Motor neuron (in vitro differentiated cells): ENCODE measurements at regions of chr14 and their contacts with region 1.

Region 1: GRCh38 chr14:23984891-23985602 is 3.7 kb upstream of the DHRS4L2 start:
- ATAC-seq: peak in 2 of 8 experiments; percentile 44 to 61
- H3K4me3 ChIP-seq: no peak overlapping the region
- H3K27ac ChIP-seq: no peak overlapping the region
- H3K4me1 ChIP-seq: peaks cover 0 to 19% of the 10 kb centered on the region in 2 donors

Region 2: DNA sequence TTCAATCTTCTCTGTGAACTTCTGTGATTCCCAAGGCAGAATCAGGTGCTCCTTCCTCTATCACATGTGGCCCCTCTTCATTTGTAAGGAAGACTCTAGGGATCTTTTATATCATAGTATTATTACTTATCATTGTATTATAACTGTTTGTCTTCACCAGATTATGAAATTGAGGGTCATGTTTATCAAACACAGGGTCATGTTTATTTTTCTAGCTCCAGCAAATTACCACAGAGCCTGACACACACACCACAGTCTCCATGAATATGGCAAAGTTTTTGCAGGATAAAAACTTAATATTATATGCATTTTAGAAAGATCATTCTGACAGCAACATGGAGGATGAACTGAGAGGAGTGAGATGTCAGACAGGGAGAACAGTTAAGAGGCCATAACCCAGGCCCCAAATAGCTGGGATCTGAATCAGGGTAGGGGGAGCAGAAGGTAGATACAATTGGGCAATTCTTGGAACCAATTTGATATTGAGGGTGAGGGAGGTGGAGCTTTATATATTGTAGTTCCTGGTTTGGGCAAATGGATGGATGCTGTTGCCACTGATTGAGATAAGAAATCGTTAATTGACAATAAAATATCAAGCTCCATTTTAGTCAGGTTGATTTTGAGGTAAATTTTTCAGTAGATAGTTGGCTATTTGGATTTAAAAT is 218.2 kb before region 1 on chr14:
- in situ Hi-C with region 1: no loop called
- ATAC-seq: no peak
- H3K4me3 ChIP-seq: no peak overlapping the region
- H3K27ac ChIP-seq: no peak overlapping the region
- H3K4me1 ChIP-seq: no peaks in the 10 kb centered on the region

Region 3: DNA sequence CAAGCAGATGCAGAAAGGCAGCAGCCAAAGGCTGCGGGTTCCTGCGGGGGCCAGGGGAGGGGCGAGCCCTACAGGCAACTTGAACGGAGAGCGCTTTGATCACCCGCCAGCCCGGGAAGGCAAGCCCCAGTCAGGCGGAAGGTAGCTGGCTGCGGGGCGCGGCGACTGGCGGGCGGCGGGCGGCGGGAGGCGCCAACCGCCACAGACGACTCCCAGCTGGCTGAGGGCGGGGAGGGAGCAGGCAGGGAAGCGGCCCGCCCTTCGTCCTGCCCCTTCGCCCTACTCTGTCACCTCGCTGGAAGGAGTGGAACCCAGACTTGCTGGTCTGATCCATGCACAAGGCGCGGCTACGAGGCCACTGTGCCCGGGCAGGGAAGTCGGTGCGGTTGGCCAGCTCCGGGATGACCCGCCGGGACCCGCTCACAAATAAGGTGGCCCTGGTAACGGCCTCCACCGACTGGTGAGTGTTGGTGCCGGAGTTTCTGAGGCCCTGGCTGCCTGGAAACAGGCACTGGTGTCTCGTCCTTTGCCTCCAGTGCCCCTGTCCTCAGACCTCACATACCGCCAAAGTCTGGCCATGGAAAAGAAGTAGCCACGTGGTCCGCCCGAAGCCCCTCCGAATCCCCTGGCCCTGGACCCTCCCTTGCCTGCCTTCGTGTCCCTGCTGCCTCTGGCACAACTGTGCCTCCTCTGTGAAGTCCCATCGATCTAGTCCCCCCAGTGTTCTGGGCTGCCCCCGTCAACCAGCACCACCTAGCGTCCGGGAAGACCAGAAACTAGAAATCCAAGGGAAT is 51.3 kb after region 1 on chr14:
- in situ Hi-C with region 1: loop called in 1 of 9 experiments (anchors 10 kb)
- ATAC-seq: peak; percentile 85 to 96 (median 94)
- H3K4me3 ChIP-seq: peak overlapping the region; percentile 27 to 39 (median 36)
- H3K27ac ChIP-seq: peak overlapping the region; percentile 39 to 44
- H3K4me1 ChIP-seq: peaks cover 3 to 4% of the 10 kb centered on the region in 2 donors

Region 4: GRCh38 chr14:24251880-24252288 is 266.8 kb after region 1 on chr14:
- in situ Hi-C with region 1: no loop called
- ATAC-seq: peak in 2 of 8 experiments; percentile 47 to 75
- H3K4me3 ChIP-seq: no peak overlapping the region
- H3K27ac ChIP-seq: no peak overlapping the region
- H3K4me1 ChIP-seq: peaks cover 0 to 3% of the 10 kb centered on the region in 2 donors

Region 5: GRCh38 chr14:24362241-24362970 is 377.4 kb after region 1 on chr14:
- in situ Hi-C with region 1: no loop called
- ATAC-seq: no peak
- H3K4me3 ChIP-seq: no peak overlapping the region
- H3K27ac ChIP-seq: no peak overlapping the region
- H3K4me1 ChIP-seq: peaks cover 0 to 6% of the 10 kb centered on the region in 2 donors